ENCODE measurements at regions of chr16 and their contacts with region 1.

Region 1: GRCh38 chr16:89330177-89330856 is 112.8 kb downstream of the ZNF778 start:
- DNase-seq: no peak
- H3K4me3 ChIP-seq: no peak overlapping the region
- H3K27ac ChIP-seq: no peak overlapping the region
- H3K4me1 ChIP-seq: peaks cover 42% of the 10 kb centered on the region
- H3K27me3 ChIP-seq: no peaks in the 10 kb centered on the region
- CTCF ChIP-seq: no peak
- POLR2A ChIP-seq: no peak

Region 2: GRCh38 chr16:89507834-89508590 is 177.7 kb after region 1 on chr16 and contains the start of gene SPG7:
- intact Hi-C with region 1: loop called (anchors 10 kb)
- DNase-seq: peak; percentile 82
- H3K4me3 ChIP-seq: peak within 1 kb of the TSS; percentile 93 to 99
- H3K27ac ChIP-seq: peak within 1 kb of the TSS; percentile 89 to 95
- H3K4me1 ChIP-seq: peaks cover 49% of the 10 kb centered on the region
- H3K27me3 ChIP-seq: no peaks in the 10 kb centered on the region
- CTCF ChIP-seq: no peak
- POLR2A ChIP-seq: peak; percentile 39
- total RNA-seq, gene SPG7: 275 to 307 TPM